ENCODE measurements at regions of chr10 and their contacts with region 1.

Region 1: GRCh38 chr10:69644658-69645295 is 14.7 kb downstream of the FAM241B start:
- DNase-seq: peak; percentile 66 to 79 (median 72)
- ATAC-seq: peak; percentile 49
- H3K4me3 ChIP-seq: no peak overlapping the region
- H3K27ac ChIP-seq: no peak overlapping the region
- H3K4me1 ChIP-seq: no peaks in the 10 kb centered on the region
- H3K27me3 ChIP-seq: no peaks in the 10 kb centered on the region
- CTCF ChIP-seq: peak; percentile 84 to 94 (median 91)
- POLR2A ChIP-seq: no peak

Region 2: GRCh38 chr10:69710008-69710888 is 65.5 kb after region 1 on chr10:
- intact Hi-C with region 1: loop called (anchors 5 kb)
- DNase-seq: no peak
- ATAC-seq: no peak
- H3K4me3 ChIP-seq: no peak overlapping the region
- H3K27ac ChIP-seq: no peak overlapping the region
- H3K4me1 ChIP-seq: no peaks in the 10 kb centered on the region
- H3K27me3 ChIP-seq: no peaks in the 10 kb centered on the region
- CTCF ChIP-seq: no peak
- POLR2A ChIP-seq: no peak

Region 3: DNA sequence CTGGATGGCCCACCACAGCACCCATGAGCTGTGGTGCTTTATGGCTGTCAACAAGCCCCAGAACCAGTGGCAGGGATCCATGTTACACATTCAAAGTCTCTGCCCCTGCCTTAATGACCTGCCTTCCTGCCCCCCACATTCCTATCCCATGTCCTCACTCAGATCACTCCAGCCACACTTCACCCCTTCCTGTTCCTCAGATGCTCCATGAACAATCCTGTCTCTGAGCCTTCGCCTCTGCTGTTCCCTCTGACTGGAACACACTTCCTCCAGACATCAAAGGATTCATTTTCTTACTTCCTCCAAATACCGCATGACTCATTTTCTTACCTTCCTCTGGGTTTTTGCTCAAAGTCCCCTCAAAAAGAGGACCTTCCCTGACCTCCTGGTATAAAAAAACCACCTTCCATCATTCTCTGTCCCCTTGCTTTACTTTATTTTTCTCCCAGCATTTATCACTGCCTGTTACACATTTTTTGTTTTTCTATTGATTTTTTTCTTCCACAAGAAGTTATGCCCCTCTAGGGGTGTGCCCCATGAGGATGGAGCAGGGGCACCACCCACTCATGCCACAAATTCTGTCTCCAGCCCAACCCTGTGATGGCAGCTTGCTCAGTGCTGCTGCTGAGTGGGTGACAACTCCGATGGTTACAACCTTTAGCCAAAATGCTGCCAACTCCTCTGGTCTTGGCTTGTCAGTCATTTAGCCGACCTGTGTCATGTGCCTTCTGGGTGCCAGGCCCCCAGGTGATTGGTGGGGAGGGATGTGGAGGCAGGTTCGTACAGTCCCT is 175.1 kb after region 1 on chr10:
- intact Hi-C with region 1: no loop called
- DNase-seq: no peak
- ATAC-seq: no peak
- H3K4me3 ChIP-seq: no peak overlapping the region
- H3K27ac ChIP-seq: no peak overlapping the region
- H3K4me1 ChIP-seq: peaks cover 2% of the 10 kb centered on the region
- H3K27me3 ChIP-seq: no peaks in the 10 kb centered on the region
- CTCF ChIP-seq: no peak
- POLR2A ChIP-seq: no peak

Measured in body of pancreas (tissue), 4 donors.